ENCODE measurements at regions of chr1 and their contacts with region 1.

Region 1: DNA sequence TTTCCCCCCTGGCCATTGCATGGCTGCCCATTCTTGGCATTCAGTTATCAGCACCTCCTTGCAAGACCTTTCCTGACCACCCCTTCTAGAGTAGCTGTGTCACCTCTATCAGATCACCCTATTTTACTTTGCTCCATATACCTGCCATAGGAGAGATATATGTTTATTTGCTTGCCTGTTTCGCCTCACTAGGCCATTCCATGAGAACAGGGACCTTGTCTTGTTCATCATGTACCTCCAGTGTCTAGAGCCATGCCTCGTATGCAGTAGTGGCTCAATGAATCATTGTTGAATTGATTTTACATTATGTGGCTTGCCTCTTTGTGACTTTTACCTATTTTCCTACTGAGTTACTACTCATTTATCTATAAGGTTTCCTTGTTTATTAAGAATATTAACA is 26.4 kb upstream of the PADI2 start:
- DNase-seq: no peak
- H3K4me3 ChIP-seq: no peak overlapping the region
- H3K27ac ChIP-seq: no peak overlapping the region
- H3K4me1 ChIP-seq: no peaks in the 10 kb centered on the region
- H3K27me3 ChIP-seq: no peaks in the 10 kb centered on the region
- CTCF ChIP-seq: no peak

Region 2: GRCh38 chr1:15975805-15976680 is 1169.6 kb before region 1 on chr1 and contains the start of gene ZBTB17:
- CTCF ChIA-PET with region 1: no interaction called
- POLR2A ChIA-PET with region 1: no interaction called
- intact Hi-C with region 1: no loop called
- DNase-seq: peak; percentile 96
- H3K4me3 ChIP-seq: peak within 1 kb of the TSS; percentile 93
- H3K27ac ChIP-seq: peak within 1 kb of the TSS; percentile 84
- H3K4me1 ChIP-seq: no peaks in the 10 kb centered on the region
- H3K27me3 ChIP-seq: no peaks in the 10 kb centered on the region
- CTCF ChIP-seq: no peak
- total RNA-seq, gene ZBTB17: 50.1 and 50.3 TPM in 2 replicates

Region 3: DNA sequence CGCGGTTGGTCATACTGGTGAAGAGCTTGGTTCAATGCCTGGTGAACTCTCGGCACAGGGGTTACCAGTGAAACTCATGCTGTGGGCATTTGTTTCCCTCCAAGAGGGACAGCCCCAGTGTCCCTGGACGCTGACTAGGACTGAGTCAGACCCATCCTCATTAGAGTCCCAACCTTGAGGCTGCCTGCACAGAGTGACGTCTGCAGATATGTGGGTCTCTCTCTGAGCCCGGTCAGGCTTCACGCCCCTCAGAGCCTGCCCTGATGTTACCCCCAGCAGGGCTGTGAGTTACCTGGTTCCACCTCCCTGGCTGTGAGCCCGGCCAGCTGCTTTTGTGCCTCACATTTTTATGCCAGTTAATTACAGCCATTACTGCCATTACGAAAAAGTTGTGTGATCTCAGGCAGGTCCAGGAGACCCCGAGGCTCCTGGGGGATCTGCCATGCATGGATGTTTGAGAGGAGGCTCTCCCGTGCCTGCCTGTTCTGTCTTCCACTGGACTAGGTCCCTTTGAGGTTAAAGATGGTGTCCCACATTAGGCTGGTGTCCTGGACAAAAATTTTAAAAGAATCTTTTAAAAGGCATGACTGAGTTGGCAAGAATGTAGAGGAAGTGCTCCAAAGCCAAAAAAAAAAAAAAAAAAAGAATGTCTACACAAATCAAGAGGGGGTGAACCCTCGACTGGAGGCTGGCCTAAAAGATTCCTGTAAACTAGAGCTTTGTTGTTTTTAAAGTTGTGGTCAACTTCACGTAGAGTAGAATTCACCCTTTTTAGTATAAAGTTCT is 22.6 kb after region 1 on chr1:
- CTCF ChIA-PET with region 1: no interaction called
- POLR2A ChIA-PET with region 1: interaction called, 13 read pairs
- intact Hi-C with region 1: no loop called
- DNase-seq: no peak
- H3K4me3 ChIP-seq: no peak overlapping the region
- H3K27ac ChIP-seq: no peak overlapping the region
- H3K4me1 ChIP-seq: no peaks in the 10 kb centered on the region
- H3K27me3 ChIP-seq: no peaks in the 10 kb centered on the region
- CTCF ChIP-seq: no peak